Caco-2 (cell line): ENCODE measurements at regions of chr6 and their contacts with region 1.

Region 1: DNA sequence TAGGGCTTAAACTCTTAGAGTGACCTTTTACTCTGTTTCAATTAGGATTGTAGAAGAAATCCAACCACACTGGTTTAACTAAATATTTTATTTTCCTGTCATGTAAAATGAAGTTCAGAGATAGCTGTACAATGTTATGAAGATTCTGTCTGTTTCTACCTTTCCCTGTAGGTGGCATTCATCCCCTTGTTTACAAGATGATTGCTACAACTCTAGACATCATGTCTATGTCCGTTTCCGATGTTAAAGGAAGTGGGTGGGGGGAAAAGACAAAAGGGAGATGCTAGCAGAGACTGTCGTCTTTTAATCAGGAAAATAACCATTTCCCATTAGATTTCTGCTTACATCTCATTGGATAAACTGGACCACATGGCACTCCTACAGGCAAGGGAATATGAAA is 30.9 kb upstream of the RIMS1 start:
- DNase-seq: peak in 1 of 2 experiments; percentile 7
- H3K4me3 ChIP-seq: no peak overlapping the region
- H3K4me3 Mint-ChIP-seq: no peak overlapping the region
- H3K27ac Mint-ChIP-seq: no peak overlapping the region
- H3K4me1 ChIP-seq: 0 out of 2 replicates have a peak, but pooled peaks cover 4% of the 10 kb centered on the region
- H3K4me1 Mint-ChIP-seq: peaks cover 9% of the 10 kb centered on the region
- H3K27me3 ChIP-seq: no peaks in the 10 kb centered on the region
- H3K27me3 Mint-ChIP-seq: no peaks in the 10 kb centered on the region
- CTCF ChIP-seq: peak; percentile 11 to 32

Region 2: GRCh38 chr6:71886184-71887005 is 31.0 kb after region 1 on chr6 and contains the start of gene RIMS1:
- CTCF ChIA-PET with region 1: no interaction called
- POLR2A ChIA-PET with region 1: no interaction called
- intact Hi-C with region 1: no loop called
- DNase-seq: peak; percentile 47 to 68
- H3K4me3 ChIP-seq: peak within 1 kb of the TSS; percentile 58
- H3K4me3 Mint-ChIP-seq: peak within 1 kb of the TSS; percentile 83
- H3K27ac Mint-ChIP-seq: no peak within 1 kb of the TSS
- H3K4me1 ChIP-seq: no peaks in the 10 kb centered on the region
- H3K4me1 Mint-ChIP-seq: peaks cover 13% of the 10 kb centered on the region
- H3K27me3 ChIP-seq: no peaks in the 10 kb centered on the region
- H3K27me3 Mint-ChIP-seq: no peaks in the 10 kb centered on the region
- CTCF ChIP-seq: peak in 1 of 2 experiments; percentile 40
- total RNA-seq, gene RIMS1: 3.4 and 4.4 TPM in 2 replicates

Region 3: DNA sequence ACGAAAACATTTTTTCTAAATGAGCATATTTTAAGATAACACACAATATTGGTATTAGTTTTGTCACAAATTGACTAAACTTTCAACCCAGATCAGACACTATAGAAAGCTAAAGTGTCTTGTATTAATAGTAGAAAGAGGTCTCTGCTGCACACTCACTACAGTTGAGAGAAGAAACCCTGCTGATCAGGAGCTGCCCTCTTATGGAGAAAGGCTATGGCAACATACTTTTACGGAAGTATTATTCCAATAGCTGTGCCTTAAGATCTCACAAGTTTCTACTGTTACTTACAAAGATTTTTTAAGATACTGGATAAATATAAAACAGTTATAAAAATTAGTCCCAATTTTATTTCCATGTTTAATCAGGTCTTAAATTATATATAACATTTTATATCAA is 186.7 kb after region 1 on chr6:
- CTCF ChIA-PET with region 1: no interaction called
- POLR2A ChIA-PET with region 1: no interaction called
- intact Hi-C with region 1: loop called (anchors 1 kb)
- DNase-seq: peak in 1 of 2 experiments; percentile 18
- H3K4me3 ChIP-seq: no peak overlapping the region
- H3K4me3 Mint-ChIP-seq: no peak overlapping the region
- H3K27ac Mint-ChIP-seq: no peak overlapping the region
- H3K4me1 ChIP-seq: no peaks in the 10 kb centered on the region
- H3K4me1 Mint-ChIP-seq: no peaks in the 10 kb centered on the region
- H3K27me3 ChIP-seq: no peaks in the 10 kb centered on the region
- H3K27me3 Mint-ChIP-seq: no peaks in the 10 kb centered on the region
- CTCF ChIP-seq: peak; percentile 19 to 51

Region 4: DNA sequence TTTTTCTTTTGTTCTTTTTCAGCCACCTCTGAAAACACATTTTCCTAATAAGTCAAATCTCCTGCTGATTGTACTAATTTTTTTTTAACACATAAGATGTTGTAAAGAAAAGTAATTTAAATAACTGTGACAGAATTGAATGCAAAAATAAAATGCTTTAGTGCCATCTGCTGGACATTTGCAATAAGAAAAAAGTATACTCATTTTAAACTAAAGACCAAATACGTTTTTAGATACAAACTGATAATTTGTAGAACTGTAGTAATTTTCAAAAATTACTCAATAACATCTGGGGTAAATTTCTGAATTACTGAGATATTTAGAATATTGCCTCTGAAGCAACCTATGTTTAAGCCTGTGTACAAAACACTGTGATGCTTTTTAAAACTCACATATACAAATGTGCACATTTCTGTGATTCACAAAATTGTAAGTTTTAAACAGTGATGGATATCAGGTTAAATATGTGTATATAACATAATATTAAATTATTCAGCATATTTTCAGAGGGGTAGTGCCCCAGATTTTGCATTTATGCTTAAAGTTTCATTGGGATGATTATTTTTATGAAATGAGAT is 229.7 kb after region 1 on chr6:
- CTCF ChIA-PET with region 1: no interaction called
- POLR2A ChIA-PET with region 1: no interaction called
- intact Hi-C with region 1: loop called (anchors 1 kb)
- DNase-seq: peak in 1 of 2 experiments; percentile 6
- H3K4me3 ChIP-seq: no peak overlapping the region
- H3K4me3 Mint-ChIP-seq: no peak overlapping the region
- H3K27ac Mint-ChIP-seq: no peak overlapping the region
- H3K4me1 ChIP-seq: no peaks in the 10 kb centered on the region
- H3K4me1 Mint-ChIP-seq: no peaks in the 10 kb centered on the region
- H3K27me3 ChIP-seq: no peaks in the 10 kb centered on the region
- H3K27me3 Mint-ChIP-seq: no peaks in the 10 kb centered on the region
- CTCF ChIP-seq: peak; percentile 32 to 53